ENCODE measurements at regions of chr16 and their contacts with region 1.

Region 1: GRCh38 chr16:88737298-88738150 is 31.2 kb downstream of the CTU2 start:
- DNase-seq: peak; percentile 75 to 82
- H3K4me3 ChIP-seq: no peak overlapping the region
- H3K4me3 Mint-ChIP-seq: no peak overlapping the region
- H3K27ac Mint-ChIP-seq: no peak overlapping the region
- H3K4me1 ChIP-seq: no peaks in the 10 kb centered on the region
- H3K4me1 Mint-ChIP-seq: no peaks in the 10 kb centered on the region
- H3K27me3 ChIP-seq: no peaks in the 10 kb centered on the region
- H3K27me3 Mint-ChIP-seq: no peaks in the 10 kb centered on the region
- CTCF ChIP-seq: peak; percentile 93 to 97

Region 2: DNA sequence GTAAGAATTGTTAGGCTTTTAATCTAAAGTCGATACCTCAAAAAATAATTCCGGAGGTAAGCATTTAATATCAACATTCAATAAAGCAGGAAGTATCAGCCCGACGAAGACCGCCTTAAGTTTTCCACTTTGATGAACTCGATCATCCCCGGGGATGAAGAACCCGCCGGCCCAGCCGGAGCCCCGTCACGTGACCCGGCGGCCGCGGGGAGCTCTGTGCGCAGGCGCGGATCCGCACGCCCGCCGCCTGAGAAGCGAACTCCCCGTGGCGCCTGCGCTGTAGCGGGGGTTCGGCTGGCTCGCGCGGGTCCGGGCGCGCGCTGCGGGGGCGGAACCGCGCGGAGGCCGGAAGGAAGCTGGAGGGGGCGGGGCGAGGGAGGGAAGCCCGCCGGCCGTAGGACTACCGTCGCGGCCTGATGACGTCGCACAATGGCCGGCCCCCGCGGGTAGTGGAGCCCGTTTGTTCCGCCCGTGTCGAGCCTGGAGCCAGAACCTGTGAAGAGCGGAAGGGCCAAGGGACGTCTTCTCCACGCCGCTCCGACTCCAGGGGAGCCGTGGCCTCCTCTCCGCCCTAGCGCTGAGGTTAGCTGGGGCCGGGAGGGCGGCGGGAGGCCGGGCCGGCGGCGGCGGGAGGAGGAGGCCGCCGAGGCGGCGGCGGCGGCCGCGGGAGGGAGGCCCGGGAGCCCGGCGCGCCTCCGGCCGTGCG is 167.4 kb before region 1 on chr16 and contains the start of gene ZC3H18:
- CTCF ChIA-PET with region 1: interaction called, 11 read pairs
- POLR2A ChIA-PET with region 1: no interaction called
- intact Hi-C with region 1: no loop called
- DNase-seq: peak; percentile 95 to 98
- H3K4me3 ChIP-seq: peak within 1 kb of the TSS; percentile 96
- H3K4me3 Mint-ChIP-seq: peak within 1 kb of the TSS; percentile 80
- H3K27ac Mint-ChIP-seq: peak within 1 kb of the TSS; percentile 91
- H3K4me1 ChIP-seq: peaks cover 9% of the 10 kb centered on the region
- H3K4me1 Mint-ChIP-seq: no peaks in the 10 kb centered on the region
- H3K27me3 ChIP-seq: no peaks in the 10 kb centered on the region
- H3K27me3 Mint-ChIP-seq: no peaks in the 10 kb centered on the region
- CTCF ChIP-seq: no peak
- total RNA-seq, gene ZC3H18: 82.0 and 91.9 TPM in 2 replicates

Region 3: DNA sequence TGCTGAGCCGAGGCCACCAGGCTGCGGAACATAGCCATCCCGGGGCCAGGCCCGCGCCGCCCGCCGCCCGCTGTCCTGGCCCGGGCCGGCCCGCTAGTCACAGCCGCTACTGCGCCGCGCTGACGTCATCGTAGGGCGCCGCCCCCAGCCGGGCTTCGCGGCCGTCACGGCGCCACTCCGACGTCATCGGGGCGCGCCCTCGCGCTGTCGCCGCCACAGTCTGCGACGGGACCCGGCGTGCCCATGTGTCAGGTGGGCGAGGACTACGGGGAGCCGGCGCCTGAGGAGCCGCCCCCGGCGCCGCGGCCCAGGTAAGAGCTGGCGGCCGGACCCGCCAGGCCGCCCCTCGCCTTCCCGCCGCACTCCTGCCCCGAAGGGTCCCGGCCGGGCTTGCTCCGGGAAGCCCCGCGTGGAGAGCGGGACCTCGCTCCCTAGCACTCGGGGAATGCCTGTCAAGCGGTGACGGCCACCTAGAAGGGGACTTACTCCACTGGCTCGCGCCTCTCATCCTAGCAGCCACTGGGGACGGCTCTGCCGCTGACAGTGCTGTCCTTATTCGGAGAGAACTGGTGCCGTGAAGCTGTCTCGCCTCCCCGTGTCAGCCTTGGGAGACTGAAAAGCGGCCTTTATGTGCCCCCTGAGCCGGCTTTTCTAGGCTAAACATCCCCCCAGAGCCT is 31.1 kb before region 1 on chr16 and contains the starts of genes CTU2 and RNF166:
- CTCF ChIA-PET with region 1: interaction called, 12 read pairs
- POLR2A ChIA-PET with region 1: no interaction called
- intact Hi-C with region 1: no loop called
- DNase-seq: peak; percentile 89 to 97
- H3K4me3 ChIP-seq: peak within 1 kb of the TSS; percentile 94
- H3K4me3 Mint-ChIP-seq: peak within 1 kb of the TSS; percentile 82
- H3K27ac Mint-ChIP-seq: peak within 1 kb of the TSS; percentile 60
- H3K4me1 ChIP-seq: peaks cover 9% of the 10 kb centered on the region; the same call in 1 of the 2 replicates
- H3K4me1 Mint-ChIP-seq: peaks cover 7% of the 10 kb centered on the region
- H3K27me3 ChIP-seq: no peaks in the 10 kb centered on the region
- H3K27me3 Mint-ChIP-seq: no peaks in the 10 kb centered on the region
- CTCF ChIP-seq: no peak
- total RNA-seq, gene CTU2: 44.3 and 54.9 TPM in 2 replicates
- total RNA-seq, gene RNF166: 37.3 and 40.4 TPM in 2 replicates

Region 4: DNA sequence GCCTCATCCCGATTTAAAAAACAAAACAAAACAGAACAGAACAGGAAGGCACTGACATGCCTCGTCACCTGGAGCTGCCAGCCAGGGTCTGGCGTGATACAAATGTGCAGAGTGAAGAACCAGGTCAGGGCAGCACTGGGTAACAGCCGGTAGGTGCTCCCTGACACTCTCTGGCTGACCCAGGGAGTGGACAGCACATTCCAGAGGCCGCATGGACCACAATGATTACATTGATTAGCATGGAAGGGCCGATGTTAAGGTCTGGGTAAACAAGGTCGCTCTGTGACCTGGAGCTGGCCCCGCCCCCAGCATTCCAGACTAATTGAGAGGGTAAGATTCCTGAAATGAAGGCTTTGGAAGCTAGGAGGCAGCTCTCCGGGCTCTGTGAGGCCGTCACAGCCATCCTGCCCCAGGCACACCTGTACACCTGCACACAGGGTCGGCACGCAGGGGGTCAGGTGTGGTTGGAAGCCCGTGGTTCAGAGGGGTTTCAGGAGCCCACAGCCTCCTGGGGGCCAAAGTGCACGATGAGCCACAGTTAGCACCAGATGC is 26.1 kb after region 1 on chr16:
- CTCF ChIA-PET with region 1: interaction called, 34 read pairs
- POLR2A ChIA-PET with region 1: no interaction called
- intact Hi-C with region 1: loop called (anchors 2 kb)
- DNase-seq: peak; percentile 95 to 96
- H3K4me3 ChIP-seq: no peak overlapping the region
- H3K4me3 Mint-ChIP-seq: peak overlapping the region; percentile 68
- H3K27ac Mint-ChIP-seq: peak overlapping the region; percentile 90
- H3K4me1 ChIP-seq: peaks cover 65% of the 10 kb centered on the region
- H3K4me1 Mint-ChIP-seq: peaks cover 19% of the 10 kb centered on the region
- H3K27me3 ChIP-seq: no peaks in the 10 kb centered on the region
- H3K27me3 Mint-ChIP-seq: no peaks in the 10 kb centered on the region
- CTCF ChIP-seq: peak; percentile 4 to 41

Region 5: DNA sequence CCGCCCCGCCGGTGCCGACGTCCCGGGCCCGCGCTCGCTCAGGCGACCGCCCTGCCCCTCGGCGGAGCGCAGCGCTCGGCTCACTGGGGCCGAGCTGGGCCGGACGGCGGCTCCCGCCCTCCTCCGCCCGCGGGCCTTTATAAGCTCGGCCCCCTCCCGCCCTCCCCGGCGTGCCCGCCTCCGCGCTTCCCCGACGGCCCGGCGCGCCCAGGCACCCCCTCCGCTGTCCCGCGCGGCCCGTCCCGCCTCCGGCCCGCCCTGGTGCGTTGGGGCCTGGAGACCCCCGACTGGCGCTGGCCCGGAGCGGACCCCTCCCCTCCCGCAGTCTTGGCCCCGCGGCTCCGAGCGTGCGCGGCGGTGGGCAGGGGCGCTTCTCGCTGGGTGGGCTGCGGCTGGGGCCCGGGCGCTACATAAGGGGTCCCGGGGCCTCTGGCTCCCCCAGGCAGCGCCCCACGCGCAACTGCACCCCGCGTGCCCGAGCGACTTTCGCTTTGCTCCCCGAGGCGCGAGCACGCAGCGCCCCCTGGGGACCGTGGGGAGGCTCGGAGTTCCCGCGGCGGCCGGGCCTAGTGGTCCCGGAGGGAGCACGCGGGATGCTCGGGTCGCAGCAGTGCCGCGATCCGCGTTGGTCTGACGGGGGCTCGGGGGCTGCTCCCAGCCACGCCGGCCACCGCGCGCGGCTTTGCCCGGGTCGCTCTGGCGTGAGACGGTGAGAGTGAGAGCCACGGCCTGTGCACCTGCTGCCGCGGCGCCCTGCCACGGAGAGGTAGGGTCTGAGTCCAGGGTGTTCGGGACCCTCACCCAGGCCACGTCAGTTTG is 47.8 kb after region 1 on chr16 and contains the start of gene PIEZO1:
- CTCF ChIA-PET with region 1: interaction called, 51 read pairs
- POLR2A ChIA-PET with region 1: interaction called, 12 read pairs
- intact Hi-C with region 1: loop called (anchors 1 kb)
- DNase-seq: peak; percentile 70 to 86
- H3K4me3 ChIP-seq: peak within 1 kb of the TSS; percentile 93
- H3K4me3 Mint-ChIP-seq: peak within 1 kb of the TSS; percentile 69
- H3K27ac Mint-ChIP-seq: peak within 1 kb of the TSS; percentile 82
- H3K4me1 ChIP-seq: peaks cover 41% of the 10 kb centered on the region
- H3K4me1 Mint-ChIP-seq: peaks cover 24% of the 10 kb centered on the region
- H3K27me3 ChIP-seq: no peaks in the 10 kb centered on the region
- H3K27me3 Mint-ChIP-seq: no peaks in the 10 kb centered on the region
- CTCF ChIP-seq: peak; percentile 93 to 96
- total RNA-seq, gene PIEZO1: 248 and 284 TPM in 2 replicates

Region 6: GRCh38 chr16:88803264-88803987 is 65.9 kb after region 1 on chr16 and contains the start of gene CDT1:
- CTCF ChIA-PET with region 1: interaction called, 10 read pairs
- POLR2A ChIA-PET with region 1: interaction called, 10 read pairs
- intact Hi-C with region 1: no loop called
- DNase-seq: peak; percentile 80 to 94
- H3K4me3 ChIP-seq: peak within 1 kb of the TSS; percentile 78
- H3K4me3 Mint-ChIP-seq: peak within 1 kb of the TSS; percentile 75
- H3K27ac Mint-ChIP-seq: peak within 1 kb of the TSS; percentile 72
- H3K4me1 ChIP-seq: no peaks in the 10 kb centered on the region; the same call in 1 of the 2 replicates
- H3K4me1 Mint-ChIP-seq: no peaks in the 10 kb centered on the region
- H3K27me3 ChIP-seq: no peaks in the 10 kb centered on the region
- H3K27me3 Mint-ChIP-seq: no peaks in the 10 kb centered on the region
- CTCF ChIP-seq: no peak
- total RNA-seq, gene CDT1: 97.7 and 98.0 TPM in 2 replicates

Region 7: GRCh38 chr16:88856828-88857733 is 119.6 kb after region 1 on chr16 and contains the starts of genes GALNS and TRAPPC2L:
- CTCF ChIA-PET with region 1: interaction called, 18 read pairs
- POLR2A ChIA-PET with region 1: no interaction called
- intact Hi-C with region 1: no loop called
- DNase-seq: peak; percentile 98 to 100
- H3K4me3 ChIP-seq: peak within 1 kb of the TSS; percentile 86
- H3K4me3 Mint-ChIP-seq: peak within 1 kb of the TSS; percentile 95
- H3K27ac Mint-ChIP-seq: peak within 1 kb of the TSS; percentile 98
- H3K4me1 ChIP-seq: peaks cover 11% of the 10 kb centered on the region
- H3K4me1 Mint-ChIP-seq: peaks cover 18% of the 10 kb centered on the region
- H3K27me3 ChIP-seq: no peaks in the 10 kb centered on the region
- H3K27me3 Mint-ChIP-seq: no peaks in the 10 kb centered on the region
- CTCF ChIP-seq: no peak
- total RNA-seq, gene GALNS: 55.3 and 57.8 TPM in 2 replicates
- total RNA-seq, gene TRAPPC2L: 179 and 181 TPM in 2 replicates